Activated CD8-positive, alpha-beta T cell treated with anti-CD3 and anti-CD28 coated beads for 36 hours (primary cell): ENCODE measurements at regions of chr2 and their contacts with region 1.

Region 1: DNA sequence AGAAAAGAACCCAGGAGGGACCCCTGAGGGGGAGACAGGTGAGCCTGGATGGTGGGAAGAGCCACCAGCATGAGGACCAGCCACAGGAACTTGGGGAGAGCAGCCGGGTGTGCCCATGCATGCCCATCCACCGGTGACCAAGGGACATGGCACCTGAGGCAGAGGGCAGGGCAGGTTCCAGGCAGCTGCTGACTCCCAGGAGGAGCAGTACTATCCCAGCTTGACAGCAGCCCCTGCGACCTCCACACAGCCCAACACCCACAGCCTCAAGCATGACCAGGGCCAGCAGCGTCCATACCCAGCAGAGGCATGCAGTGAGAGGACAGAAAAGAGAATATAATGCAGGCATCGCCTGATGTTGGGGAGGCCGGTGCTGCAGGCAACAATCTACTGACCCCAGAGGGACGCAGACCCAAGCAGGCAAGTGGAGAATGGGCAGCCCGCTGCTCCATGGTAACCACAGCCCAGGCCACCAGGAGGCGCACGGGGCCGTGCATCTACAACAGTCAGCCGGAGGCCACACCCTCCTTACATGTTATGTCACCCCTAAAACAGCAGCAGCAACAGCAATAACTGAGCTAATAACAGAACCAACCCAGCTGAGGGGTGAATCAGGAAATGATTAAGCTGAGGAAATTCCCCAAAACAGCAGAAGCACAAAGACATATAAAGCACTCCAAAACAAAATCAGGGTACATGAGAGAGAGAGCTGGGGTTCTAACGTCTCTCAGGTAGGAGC is 44.1 kb downstream of the ANKMY1 start:
- DNase-seq: peak; percentile 95
- ATAC-seq: peak; percentile 100
- H3K4me3 Mint-ChIP-seq: no peak overlapping the region
- H3K27ac Mint-ChIP-seq: peak overlapping the region; percentile 47
- H3K4me1 Mint-ChIP-seq: peaks cover 13% of the 10 kb centered on the region
- H3K27me3 Mint-ChIP-seq: no peaks in the 10 kb centered on the region
- CTCF ChIP-seq: peak; percentile 93

Region 2: GRCh38 chr2:240554767-240555493 is 41.2 kb after region 1 on chr2:
- CTCF ChIA-PET with region 1: interaction called, 11 read pairs
- POLR2A ChIA-PET with region 1: no interaction called
- intact Hi-C with region 1: no loop called
- DNase-seq: no peak
- ATAC-seq: no peak
- H3K4me3 Mint-ChIP-seq: no peak overlapping the region
- H3K27ac Mint-ChIP-seq: no peak overlapping the region
- H3K4me1 Mint-ChIP-seq: peaks cover 37% of the 10 kb centered on the region
- H3K27me3 Mint-ChIP-seq: no peaks in the 10 kb centered on the region
- CTCF ChIP-seq: no peak

Region 3: GRCh38 chr2:240579771-240580614 is 66.3 kb after region 1 on chr2:
- CTCF ChIA-PET with region 1: interaction called, 48 read pairs
- POLR2A ChIA-PET with region 1: no interaction called
- intact Hi-C with region 1: no loop called
- DNase-seq: peak; percentile 83
- ATAC-seq: peak; percentile 82
- H3K4me3 Mint-ChIP-seq: no peak overlapping the region
- H3K27ac Mint-ChIP-seq: peak overlapping the region; percentile 82
- H3K4me1 Mint-ChIP-seq: peaks cover 38% of the 10 kb centered on the region
- H3K27me3 Mint-ChIP-seq: no peaks in the 10 kb centered on the region
- CTCF ChIP-seq: peak; percentile 62